Lower lobe of right lung (tissue), 2 donors: ENCODE measurements at regions of chrX and their contacts with region 1.

Region 1: GRCh38 chrX:103063918-103064434 is at the start of gene BEX1:
- DNase-seq: peak; percentile 46
- ATAC-seq: peak in 1 of 2 donors; percentile 43
- H3K4me3 ChIP-seq: peak within 1 kb of the TSS; percentile 40
- H3K27ac ChIP-seq: no peak within 1 kb of the TSS
- H3K4me1 ChIP-seq: no peaks in the 10 kb centered on the region
- H3K27me3 ChIP-seq: no peaks in the 10 kb centered on the region
- CTCF ChIP-seq: no peak
- total RNA-seq, gene BEX1: 1.2 TPM

Region 2: GRCh38 chrX:103157496-103158320 is 93.7 kb after region 1 on chrX:
- intact Hi-C with region 1: loop called (anchors 10 kb)
- DNase-seq: no peak
- ATAC-seq: no peak
- H3K4me3 ChIP-seq: no peak overlapping the region
- H3K27ac ChIP-seq: no peak overlapping the region
- H3K4me1 ChIP-seq: no peaks in the 10 kb centered on the region
- H3K27me3 ChIP-seq: no peaks in the 10 kb centered on the region
- CTCF ChIP-seq: peak; percentile 58